Thyroid gland (tissue), 4 donors: ENCODE measurements at regions of chr2 and their contacts with region 1.

Region 1: GRCh38 chr2:176454893-176455811 is 185.9 kb downstream of the MTX2 start:
- DNase-seq: peak; percentile 82 to 85
- H3K4me3 ChIP-seq: no peak overlapping the region
- H3K27ac ChIP-seq: no peak overlapping the region
- H3K4me1 ChIP-seq: no peaks in the 10 kb centered on the region
- H3K27me3 ChIP-seq: no peaks in the 10 kb centered on the region
- CTCF ChIP-seq: peak; percentile 76 to 95 (median 82)
- POLR2A ChIP-seq: no peak

Region 2: GRCh38 chr2:176140513-176141317 is 314.4 kb before region 1 on chr2:
- intact Hi-C with region 1: loop called (anchors 2 kb)
- DNase-seq: peak; percentile 51 to 67
- H3K4me3 ChIP-seq: peak overlapping the region in 1 of 3 donors; percentile 34
- H3K27ac ChIP-seq: no peak overlapping the region
- H3K4me1 ChIP-seq: peaks cover 0 to 21% of the 10 kb centered on the region in 2 donors
- H3K27me3 ChIP-seq: peaks cover 51% of the 10 kb centered on the region
- CTCF ChIP-seq: peak; percentile 56 to 87 (median 84)
- POLR2A ChIP-seq: no peak

Region 3: GRCh38 chr2:176269319-176270099 is 185.6 kb before region 1 on chr2 and contains the start of gene MTX2:
- intact Hi-C with region 1: loop called (anchors 10 kb)
- DNase-seq: peak; percentile 73 to 74
- H3K4me3 ChIP-seq: peak within 1 kb of the TSS; percentile 9 to 83 (median 82)
- H3K27ac ChIP-seq: peak within 1 kb of the TSS; percentile 86 to 93 (median 91)
- H3K4me1 ChIP-seq: peaks cover 15 to 19% of the 10 kb centered on the region in 2 donors
- H3K27me3 ChIP-seq: no peaks in the 10 kb centered on the region
- CTCF ChIP-seq: peak in 4 of 6 experiments; percentile 20 to 37 (median 26)
- POLR2A ChIP-seq: peak in 1 of 2 donors; percentile 62
- total RNA-seq, gene MTX2: 23.4 to 42.0 (median 33.7) TPM